K562 (cell line): ENCODE measurements at regions of chr5 and their contacts with region 1.

Region 1: GRCh38 chr5:150758531-150759333 is at the start of gene DCTN4:
- DNase-seq: peak; percentile 91 to 98 (median 94)
- ATAC-seq: peak; percentile 92
- H3K4me3 ChIP-seq: peak within 1 kb of the TSS; percentile 49
- H3K27ac ChIP-seq: peak within 1 kb of the TSS; percentile 99
- H3K4me1 ChIP-seq: peaks cover 4 to 24% of the 10 kb centered on the region in 2 experiments; a peak in 4 of 5 replicates
- H3K27me3 ChIP-seq: no peaks in the 10 kb centered on the region
- CTCF ChIP-seq: no peak
- EP300 ChIP-seq: no peak
- POLR2A ChIP-seq: peak; percentile 92
- RAD21 ChIP-seq: peak; percentile 8 to 19; a peak in 2 of 4 replicates
- polyA plus RNA-seq, gene DCTN4: 20.4 to 29.6 TPM

Region 2: GRCh38 chr5:150449517-150450339 is 309.0 kb before region 1 on chr5 and contains the start of gene RPS14:
- CTCF ChIA-PET with region 1: no interaction called
- POLR2A ChIA-PET with region 1: no interaction called
- in situ Hi-C with region 1: no loop called
- intact Hi-C with region 1: no loop called
- DNase-seq: peak; percentile 93 to 96 (median 94)
- ATAC-seq: peak; percentile 94
- H3K4me3 ChIP-seq: peak within 1 kb of the TSS; percentile 87
- H3K27ac ChIP-seq: peak within 1 kb of the TSS; percentile 100
- H3K4me1 ChIP-seq: peaks cover 8 to 11% of the 10 kb centered on the region in 2 experiments; a peak in 4 of 5 replicates
- H3K27me3 ChIP-seq: no peaks in the 10 kb centered on the region
- CTCF ChIP-seq: peak; percentile 92
- EP300 ChIP-seq: 0 out of 2 replicates have a peak, but pooled peaks have one; percentile 20
- POLR2A ChIP-seq: peak; percentile 99
- RAD21 ChIP-seq: peak; percentile 11 to 15; a peak in 2 of 4 replicates
- polyA plus RNA-seq, gene RPS14: 1,824 to 2,512 TPM

Region 3: GRCh38 chr5:150656191-150657132 is 102.3 kb before region 1 on chr5:
- CTCF ChIA-PET with region 1: no interaction called
- POLR2A ChIA-PET with region 1: no interaction called
- in situ Hi-C with region 1: no loop called
- intact Hi-C with region 1: no loop called
- DNase-seq: peak; percentile 88 to 99 (median 98)
- ATAC-seq: peak; percentile 91
- H3K4me3 ChIP-seq: peak overlapping the region; percentile 64
- H3K27ac ChIP-seq: 0 out of 3 replicates have a peak overlapping the region, but pooled peaks have one; percentile 19
- H3K4me1 ChIP-seq: peaks cover 9 to 13% of the 10 kb centered on the region in 2 experiments; a peak in 4 of 5 replicates
- H3K27me3 ChIP-seq: peaks cover 6 to 50% of the 10 kb centered on the region in 2 experiments
- CTCF ChIP-seq: peak; percentile 44 to 90 (median 77); a peak in 5 of 6 replicates
- EP300 ChIP-seq: no peak
- POLR2A ChIP-seq: peak; percentile 48; the same call in 1 of the 2 replicates
- RAD21 ChIP-seq: peak; percentile 70 to 79

Region 4: GRCh38 chr5:150700594-150701293 is 58.0 kb before region 1 on chr5 and contains the start of gene RBM22:
- CTCF ChIA-PET with region 1: no interaction called
- POLR2A ChIA-PET with region 1: interaction called, 7 read pairs
- in situ Hi-C with region 1: no loop called
- intact Hi-C with region 1: loop called (anchors 5 kb)
- DNase-seq: peak; percentile 83 to 96 (median 84)
- ATAC-seq: peak; percentile 97
- H3K4me3 ChIP-seq: peak within 1 kb of the TSS; percentile 87
- H3K27ac ChIP-seq: peak within 1 kb of the TSS; percentile 90
- H3K4me1 ChIP-seq: peaks cover 0 to 20% of the 10 kb centered on the region in 2 experiments; a peak in 3 of 5 replicates
- H3K27me3 ChIP-seq: no peaks in the 10 kb centered on the region
- CTCF ChIP-seq: peak; percentile 57 to 68 (median 65)
- EP300 ChIP-seq: peak; percentile 26; the same call in 1 of the 2 replicates
- POLR2A ChIP-seq: peak; percentile 89
- RAD21 ChIP-seq: peak; percentile 36; a peak in 3 of 4 replicates
- polyA plus RNA-seq, gene RBM22: 33.6 to 65.3 TPM

Region 5: DNA sequence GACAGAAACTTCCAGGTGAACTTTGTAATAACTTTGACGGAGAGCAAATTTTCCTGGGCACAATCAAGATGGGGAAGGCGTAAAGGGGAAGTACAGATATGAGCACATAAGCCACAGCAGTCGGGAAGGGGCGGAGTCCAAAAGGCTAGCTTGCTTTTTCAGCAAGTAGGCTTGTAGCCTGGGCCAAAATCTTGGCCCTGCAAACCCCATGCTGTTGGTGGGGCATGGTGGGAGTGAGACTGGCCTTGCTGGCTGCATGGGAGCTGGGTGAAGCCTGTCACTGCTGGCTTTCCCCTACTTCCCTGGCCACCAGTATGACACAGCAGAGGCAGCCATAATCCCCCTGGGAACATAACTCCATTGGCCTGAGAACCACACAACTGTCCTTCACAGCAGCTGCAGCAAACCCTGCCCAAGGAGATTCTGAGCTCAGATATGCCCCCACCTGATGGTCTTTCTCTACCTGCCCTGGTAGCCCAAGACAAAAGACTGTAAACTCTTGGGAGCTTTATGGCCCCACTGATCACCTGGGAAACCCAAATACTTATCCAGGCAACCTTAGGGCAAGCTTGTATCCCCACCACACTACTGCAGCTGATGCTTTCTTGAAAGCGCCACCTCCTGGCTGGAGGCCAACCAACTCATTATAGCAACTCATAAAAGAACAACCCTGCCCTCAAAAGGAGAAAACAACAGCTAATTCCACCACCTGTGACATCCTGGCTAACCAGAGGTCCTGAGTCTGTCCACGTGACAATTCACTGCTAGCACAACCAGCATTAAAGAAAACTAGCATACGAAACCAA is 23.9 kb before region 1 on chr5:
- CTCF ChIA-PET with region 1: no interaction called
- POLR2A ChIA-PET with region 1: interaction called, 4 read pairs
- in situ Hi-C with region 1: no loop called
- intact Hi-C with region 1: loop called (anchors 2 kb)
- DNase-seq: peak in 3 of 4 experiments; percentile 22 to 79 (median 45)
- ATAC-seq: peak; percentile 97
- H3K4me3 ChIP-seq: no peak overlapping the region
- H3K27ac ChIP-seq: peak overlapping the region; percentile 72
- H3K4me1 ChIP-seq: peaks cover 13 to 14% of the 10 kb centered on the region in 2 experiments
- H3K27me3 ChIP-seq: no peaks in the 10 kb centered on the region
- CTCF ChIP-seq: peak; percentile 40 to 49 (median 41); a peak in 5 of 6 replicates
- EP300 ChIP-seq: no peak
- POLR2A ChIP-seq: no peak
- RAD21 ChIP-seq: 0 out of 4 replicates have a peak, but pooled peaks of 1 of the 2 experiments have one; percentile 3